Dendritic cell treated with granulocyte-macrophage colony-stimulating factor and Interleukin-4, amounts not matched to agents 40 ng/mL and 50 ng/mL, for 4 days (primary cell): ENCODE measurements at regions of chr1 and their contacts with region 1.

Region 1: DNA sequence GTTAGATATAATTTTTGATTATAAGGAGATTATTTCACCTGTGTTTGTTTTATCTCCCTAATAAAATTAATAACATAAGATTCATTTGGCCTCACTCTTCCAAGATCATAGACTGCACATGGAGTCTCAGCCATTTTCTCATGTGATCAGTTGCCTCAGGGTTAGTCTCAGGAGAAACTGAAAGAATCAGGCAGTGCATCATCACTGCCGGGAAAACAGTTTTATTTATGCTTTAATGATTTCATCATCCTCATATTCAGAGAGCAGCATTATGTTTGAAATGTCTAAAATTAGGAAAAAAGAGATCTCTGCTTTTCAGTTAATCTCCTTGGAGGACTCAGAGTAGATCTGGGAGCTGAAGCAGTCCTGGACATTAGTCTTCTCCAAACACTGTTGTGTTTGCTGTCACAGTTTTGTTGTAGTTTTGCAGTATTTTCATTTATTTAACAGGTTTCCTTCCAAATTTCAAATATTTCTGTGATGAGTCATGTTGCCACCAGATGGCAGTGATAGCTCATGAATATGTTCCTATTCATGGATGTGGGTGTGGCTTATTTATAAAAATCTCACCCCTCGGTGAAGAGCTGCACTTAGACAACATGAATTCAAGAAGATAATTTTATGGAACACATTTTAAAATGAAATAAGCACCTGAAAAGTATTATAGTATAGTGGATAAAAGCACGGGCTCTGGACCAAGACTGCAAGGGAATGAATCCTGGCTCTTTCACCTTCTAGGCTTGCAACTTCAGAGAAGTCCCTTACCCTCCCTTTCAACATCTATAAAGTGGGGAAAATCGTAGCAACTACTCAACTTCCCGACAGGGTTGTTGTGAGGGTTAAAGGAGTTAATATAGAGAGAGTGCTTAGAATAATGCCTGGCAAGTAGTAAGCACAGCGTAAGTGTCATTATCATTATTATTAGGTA is 31.2 kb downstream of the CHD1L start:
- H3K4me3 Mint-ChIP-seq: no peak overlapping the region
- H3K27ac Mint-ChIP-seq: no peak overlapping the region
- H3K4me1 Mint-ChIP-seq: no peaks in the 10 kb centered on the region
- H3K27me3 Mint-ChIP-seq: no peaks in the 10 kb centered on the region

Region 2: DNA sequence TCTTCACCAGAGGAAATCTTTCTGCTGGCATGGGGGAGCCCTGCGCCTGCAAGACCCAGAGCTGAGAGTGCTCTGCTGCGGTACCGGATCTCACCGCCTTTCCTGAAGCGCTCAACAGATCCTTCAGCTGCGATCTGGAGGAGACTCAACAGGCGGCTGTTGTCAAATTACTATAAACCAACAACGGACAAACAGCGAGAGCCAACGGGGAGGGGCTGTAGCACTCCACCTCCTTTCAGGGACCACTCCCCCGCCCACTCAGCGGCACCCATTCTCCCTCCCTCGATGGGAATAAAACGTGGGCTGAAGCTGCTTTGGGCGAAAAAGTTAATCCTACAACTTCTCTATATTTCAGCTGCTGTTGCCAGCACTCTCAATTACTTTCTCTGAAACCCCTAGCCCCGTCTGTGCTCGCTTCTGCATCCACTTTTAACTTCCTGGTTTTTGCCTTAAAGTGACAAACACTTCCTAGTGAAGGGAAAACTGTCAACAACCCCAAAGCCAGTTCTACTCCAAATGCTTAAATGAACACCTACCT is 48.4 kb before region 1 on chr1 and contains the start of gene FMO5:
- intact Hi-C with region 1: no loop called
- H3K4me3 Mint-ChIP-seq: peak within 1 kb of the TSS; percentile 93
- H3K27ac Mint-ChIP-seq: peak within 1 kb of the TSS; percentile 99
- H3K4me1 Mint-ChIP-seq: peaks cover 32% of the 10 kb centered on the region
- H3K27me3 Mint-ChIP-seq: no peaks in the 10 kb centered on the region

Region 3: GRCh38 chr1:147389532-147390524 is 116.2 kb after region 1 on chr1:
- intact Hi-C with region 1: loop called (anchors 2 kb)
- H3K4me3 Mint-ChIP-seq: no peak overlapping the region
- H3K27ac Mint-ChIP-seq: no peak overlapping the region
- H3K4me1 Mint-ChIP-seq: peaks cover 2% of the 10 kb centered on the region
- H3K27me3 Mint-ChIP-seq: peaks cover 1% of the 10 kb centered on the region

Region 4: GRCh38 chr1:147892731-147893214 is 619.1 kb after region 1 on chr1:
- intact Hi-C with region 1: loop called (anchors 2 kb)
- H3K4me3 Mint-ChIP-seq: no peak overlapping the region
- H3K27ac Mint-ChIP-seq: no peak overlapping the region
- H3K4me1 Mint-ChIP-seq: no peaks in the 10 kb centered on the region
- H3K27me3 Mint-ChIP-seq: peaks cover 4% of the 10 kb centered on the region